Sciatic nerve (tissue), 2 donors: ENCODE measurements at regions of chr2 and their contacts with region 1.

Region 1: DNA sequence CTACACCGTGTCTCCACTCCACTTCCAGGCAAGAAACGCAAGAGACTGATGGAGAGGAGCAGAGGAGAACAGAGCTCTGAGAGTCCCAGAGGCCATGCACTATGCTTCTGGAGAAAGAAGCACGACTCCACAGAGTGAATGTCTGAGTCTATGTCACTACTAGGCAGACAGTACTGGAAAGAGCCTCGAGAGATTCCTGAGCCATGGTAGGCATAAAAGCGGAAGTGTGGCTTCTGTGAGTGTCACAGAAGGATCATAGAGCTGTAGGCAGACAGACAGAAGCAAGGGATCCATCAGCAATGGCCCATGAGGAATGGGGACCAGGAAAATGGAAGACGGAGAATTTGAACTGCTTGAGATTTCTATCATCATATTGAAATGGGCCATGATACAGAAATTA is 542.6 kb downstream of the ZEB2 start:
- DNase-seq: no peak
- ATAC-seq: no peak

Region 2: GRCh38 chr2:144014103-144014502 is 36.7 kb after region 1 on chr2:
- intact Hi-C with region 1: no loop called
- DNase-seq: no peak
- ATAC-seq: no peak

Region 3: DNA sequence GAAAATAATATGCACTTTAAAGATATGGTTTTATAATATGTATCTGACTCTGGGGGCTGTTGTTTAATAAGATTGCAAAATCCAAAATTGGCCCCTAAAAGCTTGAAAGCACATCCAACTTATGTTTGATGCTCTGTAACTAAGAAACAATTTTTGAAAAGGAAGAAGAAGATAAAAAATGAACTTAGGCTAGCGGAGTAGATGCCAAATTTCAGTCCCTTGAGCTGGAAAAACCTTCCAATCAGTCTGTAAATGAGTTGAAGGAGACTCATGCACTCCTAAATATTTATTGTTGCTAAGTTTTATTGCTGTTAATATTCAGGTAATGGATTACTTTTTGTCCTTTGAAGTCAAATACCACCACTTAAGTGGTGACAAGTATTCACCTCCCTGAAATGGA is 77.6 kb after region 1 on chr2:
- intact Hi-C with region 1: loop called (anchors 2 kb)
- DNase-seq: no peak
- ATAC-seq: no peak